Calu3 (cell line): ENCODE measurements at regions of chr9 and their contacts with region 1.

Region 1: DNA sequence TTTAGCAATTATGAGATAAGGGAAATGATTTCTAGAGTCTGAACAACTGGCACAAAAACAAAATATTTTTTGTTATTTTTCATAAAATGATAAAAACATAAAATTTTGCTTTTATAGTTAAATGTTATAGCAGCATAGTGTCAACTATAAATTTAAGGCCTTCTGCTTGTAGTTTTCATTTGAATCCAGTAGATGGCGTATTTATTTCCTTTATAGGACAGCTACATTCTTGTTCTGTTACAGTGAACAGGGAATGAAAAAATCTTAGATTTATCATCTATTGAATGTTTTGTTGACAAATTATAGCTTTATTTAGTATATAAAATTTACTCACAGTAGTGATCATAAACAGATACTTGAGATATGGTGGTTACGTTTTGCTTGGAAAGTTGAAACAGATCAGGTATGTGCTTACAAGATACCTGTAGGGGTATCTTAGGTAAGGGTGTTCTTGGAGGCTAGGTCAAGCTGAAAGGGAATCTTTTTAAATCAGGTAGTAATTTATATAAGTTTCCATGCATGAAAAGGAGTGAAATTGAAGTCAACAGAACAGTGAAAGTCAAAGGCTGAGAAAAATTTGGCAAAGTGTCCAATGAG is 239.3 kb upstream of the GRIN3A start:
- DNase-seq: no peak
- H3K4me3 Mint-ChIP-seq: no peak overlapping the region
- H3K27ac Mint-ChIP-seq: no peak overlapping the region
- H3K4me1 Mint-ChIP-seq: no peaks in the 10 kb centered on the region
- H3K27me3 Mint-ChIP-seq: no peaks in the 10 kb centered on the region
- CTCF ChIP-seq: no peak

Region 2: DNA sequence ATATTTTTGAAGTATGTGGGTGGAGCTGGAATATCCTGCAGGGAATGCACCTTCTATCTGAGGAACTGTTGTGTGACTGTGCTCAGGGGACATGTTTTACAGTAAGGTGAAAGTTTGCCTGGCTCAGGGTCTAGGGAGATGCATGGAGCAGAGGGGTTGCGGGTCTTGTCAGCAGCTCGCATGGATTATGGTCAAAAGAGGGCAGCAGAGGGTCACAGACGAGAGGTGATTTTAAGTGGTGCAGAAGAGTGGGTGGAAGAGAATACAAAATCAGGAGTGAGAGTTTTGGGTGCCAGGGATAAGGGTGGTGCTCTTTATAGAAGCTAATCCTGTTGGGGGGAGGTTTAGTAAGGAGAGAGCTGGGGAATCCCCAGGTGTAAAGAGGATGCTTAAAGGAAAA is 185.8 kb before region 1 on chr9:
- CTCF ChIA-PET with region 1: no interaction called
- intact Hi-C with region 1: loop called (anchors 10 kb)
- DNase-seq: peak; percentile 53
- H3K4me3 Mint-ChIP-seq: no peak overlapping the region
- H3K27ac Mint-ChIP-seq: no peak overlapping the region
- H3K4me1 Mint-ChIP-seq: no peaks in the 10 kb centered on the region
- H3K27me3 Mint-ChIP-seq: no peaks in the 10 kb centered on the region
- CTCF ChIP-seq: peak; percentile 21